Caco-2 (cell line): ENCODE measurements at regions of chrX and their contacts with region 1.

Region 1: DNA sequence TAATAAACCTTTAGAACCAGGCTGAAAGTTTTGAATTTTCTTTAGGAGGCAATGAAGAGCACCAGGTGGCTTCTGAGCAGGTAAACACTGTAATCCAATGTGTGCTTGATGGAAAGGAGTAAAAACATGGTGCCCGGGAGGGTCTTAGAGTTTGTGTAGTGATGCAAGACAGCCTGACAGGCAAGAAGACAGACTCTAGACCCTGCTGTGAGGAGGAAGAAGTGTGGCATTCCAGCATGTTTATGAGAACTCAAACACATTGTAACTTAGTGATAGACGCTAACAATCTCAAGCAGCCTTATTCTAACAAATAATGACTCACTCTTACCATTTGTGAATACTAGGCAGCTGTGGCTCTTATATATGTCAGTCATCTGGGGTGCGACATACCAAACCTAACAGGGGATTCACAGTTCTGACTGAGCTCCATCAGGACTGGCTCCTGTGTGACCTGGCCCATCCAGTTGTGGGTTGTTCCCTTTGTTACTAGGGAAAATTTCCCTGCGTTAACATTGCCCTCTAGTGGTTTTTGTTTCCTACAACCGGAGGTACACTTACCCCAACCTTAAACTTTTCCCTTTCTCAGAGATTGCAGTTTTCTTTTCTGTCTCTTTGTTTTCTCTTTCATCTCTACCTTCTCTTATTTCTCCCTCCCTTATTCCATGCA is 53.8 kb downstream of the VSIG4 start:
- DNase-seq: peak in 1 of 2 experiments; percentile 15
- H3K4me3 ChIP-seq: no peak overlapping the region
- H3K4me3 Mint-ChIP-seq: no peak overlapping the region
- H3K27ac Mint-ChIP-seq: no peak overlapping the region
- H3K4me1 ChIP-seq: no peaks in the 10 kb centered on the region
- H3K4me1 Mint-ChIP-seq: no peaks in the 10 kb centered on the region
- H3K27me3 ChIP-seq: no peaks in the 10 kb centered on the region
- H3K27me3 Mint-ChIP-seq: no peaks in the 10 kb centered on the region
- CTCF ChIP-seq: peak in 1 of 2 experiments; percentile 43

Region 2: DNA sequence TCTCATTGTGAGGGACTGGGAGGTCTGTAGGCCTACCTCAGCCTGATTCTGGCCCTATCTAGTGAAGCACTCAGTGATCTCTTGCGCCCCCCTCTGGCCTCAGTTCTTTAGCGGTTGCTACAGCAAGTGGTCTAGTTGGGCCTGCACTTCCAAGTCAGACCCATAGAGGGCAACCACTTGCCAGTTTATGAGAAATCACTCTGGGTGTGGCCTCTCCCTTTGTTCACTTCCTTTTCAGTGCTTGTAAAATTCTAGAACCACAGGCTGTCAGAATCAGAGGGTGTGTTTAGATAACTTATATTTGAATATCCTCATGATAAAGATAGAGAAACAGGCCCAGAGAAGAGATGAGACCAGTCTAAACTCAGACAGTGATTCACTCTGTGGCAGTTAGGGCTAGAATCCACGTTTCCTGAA is 390.6 kb before region 1 on chrX:
- CTCF ChIA-PET with region 1: no interaction called
- POLR2A ChIA-PET with region 1: no interaction called
- intact Hi-C with region 1: loop called (anchors 5 kb)
- DNase-seq: peak; percentile 66 to 70
- H3K4me3 ChIP-seq: no peak overlapping the region
- H3K4me3 Mint-ChIP-seq: no peak overlapping the region
- H3K27ac Mint-ChIP-seq: no peak overlapping the region
- H3K4me1 ChIP-seq: no peaks in the 10 kb centered on the region
- H3K4me1 Mint-ChIP-seq: no peaks in the 10 kb centered on the region
- H3K27me3 ChIP-seq: no peaks in the 10 kb centered on the region
- H3K27me3 Mint-ChIP-seq: peaks cover 9% of the 10 kb centered on the region
- CTCF ChIP-seq: peak; percentile 70 to 71

Region 3: GRCh38 chrX:65871661-65872311 is 114.3 kb before region 1 on chrX:
- CTCF ChIA-PET with region 1: no interaction called
- POLR2A ChIA-PET with region 1: no interaction called
- intact Hi-C with region 1: loop called (anchors 1 kb)
- DNase-seq: peak; percentile 7 to 31
- H3K4me3 ChIP-seq: no peak overlapping the region
- H3K4me3 Mint-ChIP-seq: no peak overlapping the region
- H3K27ac Mint-ChIP-seq: no peak overlapping the region
- H3K4me1 ChIP-seq: no peaks in the 10 kb centered on the region
- H3K4me1 Mint-ChIP-seq: no peaks in the 10 kb centered on the region
- H3K27me3 ChIP-seq: no peaks in the 10 kb centered on the region
- H3K27me3 Mint-ChIP-seq: no peaks in the 10 kb centered on the region
- CTCF ChIP-seq: peak in 1 of 2 experiments; percentile 8

Region 4: GRCh38 chrX:66046612-66047235 is 60.7 kb after region 1 on chrX:
- CTCF ChIA-PET with region 1: no interaction called
- POLR2A ChIA-PET with region 1: no interaction called
- intact Hi-C with region 1: no loop called
- DNase-seq: no peak
- H3K4me3 ChIP-seq: no peak overlapping the region
- H3K4me3 Mint-ChIP-seq: no peak overlapping the region
- H3K27ac Mint-ChIP-seq: no peak overlapping the region
- H3K4me1 ChIP-seq: no peaks in the 10 kb centered on the region
- H3K4me1 Mint-ChIP-seq: no peaks in the 10 kb centered on the region
- H3K27me3 ChIP-seq: no peaks in the 10 kb centered on the region
- H3K27me3 Mint-ChIP-seq: no peaks in the 10 kb centered on the region
- CTCF ChIP-seq: no peak